Caco-2 (cell line): ENCODE measurements at regions of chr18 and their contacts with region 1.

Region 1: GRCh38 chr18:70082430-70082829 is 123.1 kb downstream of the RTTN start:
- DNase-seq: no peak
- H3K4me3 ChIP-seq: no peak overlapping the region
- H3K4me3 Mint-ChIP-seq: no peak overlapping the region
- H3K27ac Mint-ChIP-seq: no peak overlapping the region
- H3K4me1 ChIP-seq: no peaks in the 10 kb centered on the region
- H3K4me1 Mint-ChIP-seq: no peaks in the 10 kb centered on the region
- H3K27me3 ChIP-seq: no peaks in the 10 kb centered on the region
- H3K27me3 Mint-ChIP-seq: no peaks in the 10 kb centered on the region
- CTCF ChIP-seq: no peak

Region 2: DNA sequence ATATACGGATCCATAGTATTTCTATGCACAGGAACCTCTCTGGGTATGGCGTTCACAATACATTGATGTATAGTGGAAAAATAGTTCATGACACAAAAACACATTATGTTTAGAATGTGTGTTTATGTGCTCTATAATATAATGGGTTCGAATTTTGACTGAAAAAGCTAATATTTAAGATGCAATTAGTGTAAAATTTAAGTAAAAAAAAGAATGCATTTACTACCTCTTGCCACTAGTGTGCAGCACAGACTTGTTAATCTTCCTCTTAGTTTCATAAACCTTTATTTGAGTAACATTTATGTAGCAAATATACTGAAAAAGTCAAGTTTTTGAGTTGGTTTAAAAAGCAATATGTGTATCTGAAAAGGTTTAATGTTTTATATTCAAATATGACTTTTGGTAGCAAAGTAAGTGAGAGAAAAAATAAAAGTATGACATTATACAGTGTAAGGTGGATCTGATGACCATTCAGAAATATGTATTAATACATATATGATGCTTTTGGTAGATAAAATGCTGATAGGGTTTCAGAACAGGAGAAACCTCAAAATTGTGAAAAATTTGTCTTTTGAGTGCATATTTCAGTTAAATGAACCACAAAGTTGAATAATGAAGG is 1235.1 kb before region 1 on chr18:
- CTCF ChIA-PET with region 1: no interaction called
- POLR2A ChIA-PET with region 1: no interaction called
- intact Hi-C with region 1: loop called (anchors 10 kb)
- DNase-seq: peak in 1 of 2 experiments; percentile 1
- H3K4me3 ChIP-seq: no peak overlapping the region
- H3K4me3 Mint-ChIP-seq: no peak overlapping the region
- H3K27ac Mint-ChIP-seq: no peak overlapping the region
- H3K4me1 ChIP-seq: no peaks in the 10 kb centered on the region
- H3K4me1 Mint-ChIP-seq: no peaks in the 10 kb centered on the region
- H3K27me3 ChIP-seq: no peaks in the 10 kb centered on the region
- H3K27me3 Mint-ChIP-seq: no peaks in the 10 kb centered on the region
- CTCF ChIP-seq: peak in 1 of 2 experiments; percentile 43

Region 3: DNA sequence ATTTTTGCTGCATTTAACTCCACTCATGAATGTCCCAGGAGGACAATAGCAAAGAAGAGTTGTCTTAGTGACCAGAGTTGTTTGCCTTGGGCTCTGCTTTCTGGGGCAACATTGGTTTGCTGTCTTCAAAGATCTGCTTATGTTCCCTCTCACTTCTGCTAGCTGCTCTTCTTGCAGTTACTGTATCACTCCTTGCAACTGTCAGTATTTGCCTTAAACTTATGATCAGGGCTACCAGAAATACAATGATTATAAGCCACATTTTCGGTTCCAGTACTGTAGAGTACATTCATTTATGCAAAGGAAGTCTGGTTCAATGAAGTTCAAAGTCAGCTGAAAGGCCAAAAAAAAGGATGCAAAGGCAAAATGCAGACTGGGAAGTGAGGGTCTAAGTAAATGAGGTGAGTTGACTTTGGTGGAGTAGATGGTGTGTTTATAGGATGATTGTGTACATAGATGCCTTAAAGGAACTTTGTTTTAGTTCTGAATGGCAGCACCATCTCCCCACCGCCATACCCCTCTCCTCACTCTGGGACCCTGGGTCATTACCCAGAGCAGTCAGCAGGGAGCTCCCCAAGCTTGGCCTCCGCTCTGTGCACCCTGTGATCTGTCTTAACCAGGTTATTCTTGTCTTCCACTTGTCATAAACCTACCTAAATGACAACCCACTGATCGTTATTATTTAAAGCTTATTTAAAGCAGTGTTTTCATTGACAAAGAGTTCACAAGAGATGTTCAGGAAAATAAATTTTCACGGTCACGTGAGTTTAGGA is 445.7 kb before region 1 on chr18:
- CTCF ChIA-PET with region 1: no interaction called
- POLR2A ChIA-PET with region 1: no interaction called
- intact Hi-C with region 1: loop called (anchors 1 kb)
- DNase-seq: peak in 1 of 2 experiments; percentile 19
- H3K4me3 ChIP-seq: no peak overlapping the region
- H3K4me3 Mint-ChIP-seq: no peak overlapping the region
- H3K27ac Mint-ChIP-seq: no peak overlapping the region
- H3K4me1 ChIP-seq: no peaks in the 10 kb centered on the region
- H3K4me1 Mint-ChIP-seq: no peaks in the 10 kb centered on the region
- H3K27me3 ChIP-seq: no peaks in the 10 kb centered on the region
- H3K27me3 Mint-ChIP-seq: peaks cover 5% of the 10 kb centered on the region
- CTCF ChIP-seq: peak; percentile 25 to 47